Thyroid gland (tissue), 4 donors: ENCODE measurements at regions of chr22 and their contacts with region 1.

Region 1: DNA sequence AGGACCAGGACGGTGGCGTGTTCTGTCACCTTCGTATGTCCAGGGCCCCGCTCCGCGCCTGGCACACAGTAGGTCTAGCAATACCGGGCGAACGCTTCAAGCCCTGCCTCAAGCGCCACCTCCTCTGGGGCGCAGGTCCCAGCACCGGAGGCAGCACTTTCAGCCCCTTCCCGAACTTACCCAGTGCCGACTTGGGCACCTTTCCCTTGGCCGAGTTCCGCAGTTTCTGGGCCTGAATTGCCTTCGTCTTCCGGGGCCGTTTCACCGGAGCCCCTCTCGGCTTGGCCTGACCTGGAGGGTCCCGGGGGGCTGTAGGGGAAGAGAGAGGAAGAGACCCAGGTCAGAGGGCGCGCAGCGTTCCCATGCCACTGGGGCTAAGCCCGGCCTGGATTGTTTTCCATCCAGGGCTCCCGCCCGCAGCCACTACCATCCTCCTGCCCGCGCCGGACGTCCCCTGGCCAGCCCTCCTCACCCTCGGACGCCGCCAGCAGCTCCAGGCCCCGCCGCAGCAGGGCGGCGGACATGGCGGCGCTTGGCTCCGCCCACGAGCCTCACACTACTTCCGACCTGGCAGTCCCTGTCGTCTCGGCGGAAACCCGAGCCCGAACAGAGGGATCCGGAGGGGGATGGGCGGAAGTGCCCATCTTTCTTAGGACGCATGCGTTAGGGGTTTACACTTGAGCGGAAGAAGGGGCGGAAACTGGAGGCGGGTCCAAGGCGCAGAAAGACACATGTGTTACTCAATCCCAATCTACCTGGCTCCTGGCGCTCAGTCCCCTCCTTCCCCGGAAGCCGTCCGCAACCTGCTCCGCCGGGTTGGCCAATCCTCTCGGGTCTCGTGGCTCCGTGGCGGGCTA is at the start of gene RPS19BP1:
- DNase-seq: peak; percentile 100
- H3K4me3 ChIP-seq: peak within 1 kb of the TSS; percentile 70 to 96 (median 88)
- H3K27ac ChIP-seq: peak within 1 kb of the TSS; percentile 78 to 91 (median 82)
- H3K4me1 ChIP-seq: peaks cover 39 to 50% of the 10 kb centered on the region in 2 donors
- H3K27me3 ChIP-seq: no peaks in the 10 kb centered on the region
- CTCF ChIP-seq: peak in 1 of 6 experiments; percentile 2
- POLR2A ChIP-seq: peak; percentile 68 to 86
- total RNA-seq, gene RPS19BP1: 120 to 243 (median 171) TPM

Region 2: DNA sequence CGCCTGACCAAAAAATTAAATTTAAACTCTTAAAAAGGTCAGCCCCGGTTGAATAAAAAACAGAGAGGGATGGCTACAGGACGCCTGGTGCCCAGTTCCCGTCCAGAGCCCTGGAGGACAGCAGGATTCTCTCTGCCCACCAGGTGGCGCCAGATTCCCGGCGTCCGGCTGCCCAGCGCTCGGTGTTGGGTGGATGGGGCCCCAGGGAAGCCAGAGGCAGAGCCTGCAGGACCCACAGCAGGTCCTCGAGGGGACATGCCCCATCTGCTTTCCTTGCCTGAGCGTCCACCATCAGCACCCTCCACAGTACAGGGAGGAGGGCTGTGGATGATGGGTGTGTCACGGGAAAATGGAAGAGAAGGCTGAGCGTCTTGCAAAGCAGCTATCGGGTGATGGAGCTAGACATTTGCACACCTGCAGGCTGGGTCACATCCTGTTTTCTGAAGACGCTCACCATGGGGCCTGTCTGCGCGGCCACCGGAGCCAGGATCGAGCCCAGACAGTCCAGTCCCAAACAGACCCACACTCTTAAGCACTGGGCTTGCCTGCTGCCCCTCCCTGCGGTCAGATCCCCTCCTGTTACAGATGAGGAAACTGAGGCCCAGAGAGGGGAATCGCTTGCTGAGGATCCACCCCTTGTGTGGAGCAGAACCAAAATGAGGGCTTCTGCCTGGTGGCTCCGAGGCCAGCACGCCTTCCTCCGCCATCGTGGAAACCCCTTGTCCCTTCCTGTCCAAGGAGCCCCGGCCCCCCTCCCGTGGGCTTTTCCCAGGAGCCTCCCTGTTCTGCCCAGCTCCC is 361.4 kb before region 1 on chr22:
- intact Hi-C with region 1: loop called (anchors 5 kb)
- DNase-seq: peak; percentile 75 to 80
- H3K4me3 ChIP-seq: no peak overlapping the region
- H3K27ac ChIP-seq: no peak overlapping the region
- H3K4me1 ChIP-seq: peaks cover 28 to 42% of the 10 kb centered on the region in 2 donors
- H3K27me3 ChIP-seq: no peaks in the 10 kb centered on the region
- CTCF ChIP-seq: peak; percentile 92 to 97 (median 96)
- POLR2A ChIP-seq: no peak

Region 3: DNA sequence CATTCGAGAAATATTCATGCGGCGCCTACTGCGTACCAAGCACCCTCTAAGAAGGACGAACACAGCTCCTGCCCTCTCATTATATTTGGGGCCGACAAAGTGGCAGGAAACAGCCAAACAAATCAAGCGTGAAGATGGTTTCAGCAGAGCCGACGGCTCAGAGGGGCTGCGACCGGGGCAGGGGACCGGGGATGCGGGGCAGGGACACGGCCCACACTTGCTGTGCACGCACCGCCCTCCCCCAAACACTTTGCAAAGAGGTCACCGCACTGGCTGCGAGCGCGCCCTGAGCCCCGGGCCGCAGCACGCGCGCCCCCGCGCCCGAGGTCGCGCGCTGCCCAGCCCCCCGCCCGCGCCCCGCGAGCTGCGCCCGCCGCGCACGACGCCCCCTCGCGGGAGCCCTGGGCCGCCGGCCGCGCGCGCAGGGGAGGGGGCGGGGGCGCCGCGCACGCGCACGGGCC is 182.9 kb before region 1 on chr22:
- intact Hi-C with region 1: loop called (anchors 5 kb)
- DNase-seq: peak; percentile 14 to 19
- H3K4me3 ChIP-seq: peak overlapping the region in 1 of 3 donors; percentile 68
- H3K27ac ChIP-seq: no peak overlapping the region
- H3K4me1 ChIP-seq: peaks cover 14 to 17% of the 10 kb centered on the region in 2 donors
- H3K27me3 ChIP-seq: no peaks in the 10 kb centered on the region
- CTCF ChIP-seq: no peak
- POLR2A ChIP-seq: no peak

Region 4: DNA sequence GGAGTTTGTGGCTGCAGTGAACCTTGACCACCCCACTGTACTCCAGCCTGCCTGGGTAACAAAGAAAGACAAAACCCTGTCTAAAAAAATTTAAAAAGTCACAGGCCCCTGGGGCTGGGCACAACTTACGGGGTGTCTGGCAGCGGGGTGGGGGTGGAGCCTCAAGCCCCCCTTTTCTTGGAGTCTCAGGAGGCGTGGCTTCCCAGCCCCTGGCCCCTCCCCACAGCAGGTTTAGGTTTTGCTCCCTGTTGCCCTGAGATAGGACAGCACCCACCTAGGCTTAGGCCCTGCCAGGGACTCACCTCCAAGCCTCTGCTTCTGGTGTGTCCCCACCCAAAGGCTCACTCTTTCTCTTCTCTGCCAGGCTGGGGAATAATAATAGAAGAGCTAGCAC is 53.2 kb before region 1 on chr22:
- intact Hi-C with region 1: no loop called
- DNase-seq: no peak
- H3K4me3 ChIP-seq: no peak overlapping the region
- H3K27ac ChIP-seq: no peak overlapping the region
- H3K4me1 ChIP-seq: no peaks in the 10 kb centered on the region
- H3K27me3 ChIP-seq: no peaks in the 10 kb centered on the region
- CTCF ChIP-seq: no peak
- POLR2A ChIP-seq: no peak

Region 5: DNA sequence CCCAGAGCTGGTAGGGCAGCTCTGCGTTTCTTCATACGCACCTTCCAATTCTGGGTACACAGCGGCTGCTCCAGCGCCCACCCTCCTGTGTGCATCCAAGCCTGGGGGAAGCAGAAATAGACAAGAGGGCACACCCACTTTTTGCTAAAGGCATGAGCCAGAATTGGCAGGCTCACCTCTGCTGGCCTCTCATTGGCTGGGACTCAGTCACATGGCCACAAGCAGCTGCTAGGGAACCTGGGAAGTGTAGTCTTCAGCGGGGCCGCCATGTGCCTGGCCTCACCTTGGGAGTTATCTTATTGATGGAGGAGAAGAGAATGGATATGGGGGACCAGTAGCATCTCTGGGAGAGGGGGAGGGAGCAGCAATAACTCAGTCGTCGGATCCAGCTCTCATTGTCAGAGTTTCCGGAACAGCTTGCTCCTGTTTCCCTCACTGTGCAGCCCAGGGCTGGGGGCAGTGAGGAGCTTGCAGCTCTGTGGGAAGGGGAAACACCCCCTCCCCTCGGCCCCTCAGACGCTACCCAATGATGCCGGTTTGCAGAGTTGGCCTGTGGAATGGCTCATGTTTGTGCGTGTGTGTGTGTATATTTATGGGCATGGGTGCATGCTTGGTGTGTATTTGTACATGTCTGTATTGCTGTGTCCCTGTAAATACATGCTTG is 42.2 kb before region 1 on chr22:
- intact Hi-C with region 1: loop called (anchors 5 kb)
- DNase-seq: peak; percentile 81 to 85
- H3K4me3 ChIP-seq: no peak overlapping the region
- H3K27ac ChIP-seq: no peak overlapping the region
- H3K4me1 ChIP-seq: no peaks in the 10 kb centered on the region
- H3K27me3 ChIP-seq: no peaks in the 10 kb centered on the region
- CTCF ChIP-seq: no peak
- POLR2A ChIP-seq: no peak

Region 6: GRCh38 chr22:40024201-40025061 is 492.0 kb after region 1 on chr22:
- intact Hi-C with region 1: loop called (anchors 5 kb)
- DNase-seq: peak; percentile 73 to 76
- H3K4me3 ChIP-seq: no peak overlapping the region
- H3K27ac ChIP-seq: peak overlapping the region in 1 of 3 donors; percentile 39
- H3K4me1 ChIP-seq: peaks cover 22 to 32% of the 10 kb centered on the region in 2 donors
- H3K27me3 ChIP-seq: no peaks in the 10 kb centered on the region
- CTCF ChIP-seq: peak; percentile 54 to 83 (median 78)
- POLR2A ChIP-seq: no peak

Region 7: GRCh38 chr22:40346178-40347118 is 814.0 kb after region 1 on chr22 and contains the start of gene ADSL:
- intact Hi-C with region 1: loop called (anchors 5 kb)
- DNase-seq: peak; percentile 87 to 89
- H3K4me3 ChIP-seq: peak within 1 kb of the TSS; percentile 42 to 62 (median 57)
- H3K27ac ChIP-seq: peak within 1 kb of the TSS; percentile 37 to 60 (median 59)
- H3K4me1 ChIP-seq: peaks cover 15 to 22% of the 10 kb centered on the region in 2 donors
- H3K27me3 ChIP-seq: no peaks in the 10 kb centered on the region
- CTCF ChIP-seq: peak in 3 of 6 experiments; percentile 14 to 17 (median 15)
- POLR2A ChIP-seq: peak in 1 of 2 donors; percentile 78
- total RNA-seq, gene ADSL: 49.0 to 69.4 (median 60.1) TPM